ENCODE measurements at regions of chr2 and their contacts with region 1.

Region 1: DNA sequence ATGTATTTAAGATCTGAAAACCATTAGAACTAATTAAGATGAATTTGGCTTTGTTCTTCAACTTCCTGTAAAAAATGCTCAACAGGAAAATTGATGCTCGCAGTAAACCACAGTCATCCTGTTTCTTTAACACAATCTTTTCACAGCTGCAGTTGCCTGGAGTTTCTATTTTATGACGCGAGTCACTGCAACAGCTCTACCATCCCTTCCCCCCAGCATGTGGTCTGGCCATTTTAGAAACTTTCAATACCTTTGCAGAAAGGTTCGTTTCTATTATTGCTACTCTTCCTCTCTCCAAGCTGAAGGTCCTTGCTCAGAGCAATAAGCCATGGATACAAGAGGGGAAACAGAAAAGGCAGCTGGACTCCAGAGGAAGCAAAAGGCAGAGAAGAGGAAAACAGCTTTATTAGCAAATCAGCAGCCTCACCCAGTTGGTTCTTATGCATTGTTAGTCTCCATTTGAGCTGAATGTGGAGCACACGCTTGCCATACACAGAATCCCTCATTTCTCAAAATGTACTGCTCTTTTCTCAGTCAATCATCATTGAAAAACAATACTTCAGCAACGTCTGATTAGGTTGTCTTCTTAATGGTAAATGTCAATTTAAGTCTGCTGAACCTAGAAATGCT is 3.9 kb downstream of the WIPF1 start:
- DNase-seq: peak; percentile 79
- H3K4me3 Mint-ChIP-seq: peak overlapping the region; percentile 86
- H3K27ac Mint-ChIP-seq: peak overlapping the region; percentile 96
- H3K4me1 Mint-ChIP-seq: peaks cover 55% of the 10 kb centered on the region
- H3K27me3 Mint-ChIP-seq: no peaks in the 10 kb centered on the region

Region 2: DNA sequence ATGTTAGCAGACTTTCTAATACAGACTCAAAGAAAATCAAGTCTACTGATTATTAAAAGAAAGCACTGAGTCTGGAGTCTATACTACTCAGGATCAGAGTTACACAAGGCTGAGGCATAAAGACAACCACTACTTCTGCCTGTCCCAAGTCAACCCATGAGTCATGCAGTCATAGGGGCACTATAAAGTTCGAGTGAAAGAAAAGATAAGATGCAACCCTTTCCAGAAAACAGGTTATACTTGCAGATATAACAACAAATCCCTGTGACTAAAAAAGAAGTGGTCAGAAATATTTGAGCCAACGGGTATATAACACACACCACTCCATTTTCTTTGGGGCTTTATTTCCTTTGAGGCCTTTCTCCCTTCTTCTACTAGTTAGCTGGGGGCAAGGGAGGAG is 216.7 kb before region 1 on chr2:
- CTCF ChIA-PET with region 1: no interaction called
- POLR2A ChIA-PET with region 1: no interaction called
- DNase-seq: no peak
- H3K4me3 Mint-ChIP-seq: no peak overlapping the region
- H3K27ac Mint-ChIP-seq: no peak overlapping the region
- H3K4me1 Mint-ChIP-seq: no peaks in the 10 kb centered on the region
- H3K27me3 Mint-ChIP-seq: no peaks in the 10 kb centered on the region

Region 3: GRCh38 chr2:174492963-174493431 is 100.7 kb before region 1 on chr2:
- CTCF ChIA-PET with region 1: interaction called, 7 read pairs
- POLR2A ChIA-PET with region 1: interaction called, 68 read pairs
- DNase-seq: peak; percentile 69
- H3K4me3 Mint-ChIP-seq: peak overlapping the region; percentile 69
- H3K27ac Mint-ChIP-seq: peak overlapping the region; percentile 97
- H3K4me1 Mint-ChIP-seq: peaks cover 61% of the 10 kb centered on the region
- H3K27me3 Mint-ChIP-seq: no peaks in the 10 kb centered on the region

Region 4: DNA sequence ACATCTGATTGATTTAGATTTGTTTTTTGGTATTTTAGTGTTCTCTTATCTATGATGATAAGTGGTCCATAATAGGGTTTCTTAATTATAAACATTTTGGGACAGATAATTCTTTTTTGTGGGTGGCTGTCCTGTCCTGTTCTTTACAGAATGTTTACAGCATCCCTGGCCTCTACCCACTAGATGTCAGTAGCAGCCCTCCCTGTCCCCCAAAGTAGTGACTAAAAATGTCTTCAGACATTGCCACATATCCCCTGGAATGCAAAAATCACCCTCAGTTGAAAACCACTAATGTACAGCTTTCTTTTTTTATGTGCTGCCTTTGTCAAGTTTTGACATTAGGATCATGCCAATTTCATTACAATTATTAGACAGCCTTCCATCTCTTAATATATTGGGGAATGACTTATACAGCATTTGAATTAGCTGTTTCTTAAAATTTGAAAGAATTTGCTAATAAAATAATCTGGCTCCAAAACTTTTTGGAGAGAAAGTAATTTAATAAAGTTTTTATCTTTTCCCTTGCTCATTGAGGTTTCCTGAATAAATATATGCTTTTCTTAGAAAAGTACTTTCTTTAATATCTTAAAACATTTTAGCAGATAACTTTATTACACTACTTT is 15.6 kb before region 1 on chr2:
- CTCF ChIA-PET with region 1: interaction called, 13 read pairs
- POLR2A ChIA-PET with region 1: interaction called, 204 read pairs
- DNase-seq: peak; percentile 57
- H3K4me3 Mint-ChIP-seq: no peak overlapping the region
- H3K27ac Mint-ChIP-seq: no peak overlapping the region
- H3K4me1 Mint-ChIP-seq: peaks cover 78% of the 10 kb centered on the region
- H3K27me3 Mint-ChIP-seq: no peaks in the 10 kb centered on the region

Region 5: GRCh38 chr2:174682578-174683391 is 89.1 kb after region 1 on chr2:
- CTCF ChIA-PET with region 1: interaction called, 162 read pairs
- POLR2A ChIA-PET with region 1: interaction called, 117 read pairs
- DNase-seq: peak; percentile 64
- H3K4me3 Mint-ChIP-seq: peak overlapping the region; percentile 84
- H3K27ac Mint-ChIP-seq: peak overlapping the region; percentile 76
- H3K4me1 Mint-ChIP-seq: peaks cover 62% of the 10 kb centered on the region
- H3K27me3 Mint-ChIP-seq: no peaks in the 10 kb centered on the region

Region 6: DNA sequence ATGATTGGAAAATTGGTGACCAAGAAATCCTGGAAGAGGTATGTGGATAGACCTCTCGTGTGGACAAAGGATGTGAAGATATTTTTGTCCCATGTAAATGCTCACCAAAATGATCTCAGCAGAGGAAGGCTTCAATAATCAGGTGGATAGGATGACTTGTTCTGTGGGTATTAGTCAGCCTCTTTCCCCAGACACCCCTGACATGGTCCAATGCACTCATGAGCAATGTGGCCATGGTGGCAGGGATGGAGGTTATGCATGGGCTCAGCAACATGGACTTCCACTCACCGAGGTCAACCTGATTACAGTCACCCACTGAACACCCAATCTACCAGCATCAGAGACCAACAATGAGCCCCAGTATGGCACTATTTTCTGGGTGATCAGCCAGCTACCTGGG is 150.4 kb after region 1 on chr2:
- CTCF ChIA-PET with region 1: no interaction called
- POLR2A ChIA-PET with region 1: no interaction called
- DNase-seq: no peak
- H3K4me3 Mint-ChIP-seq: no peak overlapping the region
- H3K27ac Mint-ChIP-seq: no peak overlapping the region
- H3K4me1 Mint-ChIP-seq: peaks cover 2% of the 10 kb centered on the region
- H3K27me3 Mint-ChIP-seq: peaks cover 14% of the 10 kb centered on the region

Region 7: DNA sequence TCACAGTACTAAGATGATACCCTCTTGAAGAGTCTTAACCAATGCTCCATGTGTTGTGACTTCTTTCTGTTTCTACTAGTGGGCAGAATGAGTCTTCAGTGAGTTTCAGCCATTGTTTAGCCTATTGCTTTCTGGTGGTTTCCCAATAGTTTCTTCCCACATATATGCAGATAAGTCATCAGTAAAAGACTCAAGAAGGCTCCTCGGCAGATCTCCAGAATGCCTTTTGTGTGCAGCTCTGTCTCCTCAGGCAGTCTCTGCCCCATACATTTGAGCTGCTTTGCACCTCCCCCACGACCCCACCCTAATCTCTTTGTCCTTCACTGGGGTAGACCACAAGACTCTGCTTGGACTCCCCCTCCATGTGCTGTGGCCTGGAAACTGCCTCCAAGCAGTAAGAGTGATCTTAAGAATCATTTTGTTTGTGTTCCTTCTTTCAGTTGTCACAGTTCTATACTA is 242.1 kb after region 1 on chr2:
- CTCF ChIA-PET with region 1: no interaction called
- POLR2A ChIA-PET with region 1: no interaction called
- DNase-seq: no peak
- H3K4me3 Mint-ChIP-seq: no peak overlapping the region
- H3K27ac Mint-ChIP-seq: no peak overlapping the region
- H3K4me1 Mint-ChIP-seq: peaks cover 24% of the 10 kb centered on the region
- H3K27me3 Mint-ChIP-seq: no peaks in the 10 kb centered on the region

Measured in activated CD4-positive, alpha-beta memory T cell treated with anti-CD3 and anti-CD28 coated beads, Interleukin-2, amount 10 ng/mL, durations not matched to agents 7 days and 5 days (primary cell).